ENCODE measurements at regions of chr18 and their contacts with region 1.

Region 1: GRCh38 chr18:35143622-35144596 is 96.9 kb upstream of the ZNF397 start:
- DNase-seq: peak; percentile 70
- H3K4me3 ChIP-seq: no peak overlapping the region; a peak in 1 of 4 replicates
- H3K27ac ChIP-seq: peak overlapping the region in 1 of 2 experiments; percentile 25; a peak in 1 of 4 replicates
- H3K4me1 ChIP-seq: peaks cover 0 to 4% of the 10 kb centered on the region in 2 experiments; a peak in 1 of 4 replicates
- H3K27me3 ChIP-seq: no peaks in the 10 kb centered on the region
- CTCF ChIP-seq: peak; percentile 84
- EP300 ChIP-seq: no peak
- RAD21 ChIP-seq: peak; percentile 97

Region 2: GRCh38 chr18:34867520-34867919 is 276.4 kb before region 1 on chr18:
- CTCF ChIA-PET with region 1: interaction called, 10 read pairs
- POLR2A ChIA-PET with region 1: no interaction called
- DNase-seq: peak; percentile 57
- H3K4me3 ChIP-seq: no peak overlapping the region; a peak in 1 of 4 replicates
- H3K27ac ChIP-seq: no peak overlapping the region
- H3K4me1 ChIP-seq: peaks cover 0 to 4% of the 10 kb centered on the region in 2 experiments; a peak in 2 of 4 replicates
- H3K27me3 ChIP-seq: no peaks in the 10 kb centered on the region
- CTCF ChIP-seq: peak; percentile 39
- EP300 ChIP-seq: no peak
- RAD21 ChIP-seq: peak; percentile 29

Region 3: GRCh38 chr18:35005963-35006577 is 137.8 kb before region 1 on chr18:
- CTCF ChIA-PET with region 1: interaction called, 35 read pairs
- POLR2A ChIA-PET with region 1: interaction called, 3 read pairs
- DNase-seq: peak; percentile 60
- H3K4me3 ChIP-seq: no peak overlapping the region
- H3K27ac ChIP-seq: no peak overlapping the region
- H3K4me1 ChIP-seq: no peaks in the 10 kb centered on the region; a peak in 1 of 4 replicates
- H3K27me3 ChIP-seq: no peaks in the 10 kb centered on the region
- CTCF ChIP-seq: peak; percentile 75
- EP300 ChIP-seq: no peak
- RAD21 ChIP-seq: peak; percentile 95

Region 4: DNA sequence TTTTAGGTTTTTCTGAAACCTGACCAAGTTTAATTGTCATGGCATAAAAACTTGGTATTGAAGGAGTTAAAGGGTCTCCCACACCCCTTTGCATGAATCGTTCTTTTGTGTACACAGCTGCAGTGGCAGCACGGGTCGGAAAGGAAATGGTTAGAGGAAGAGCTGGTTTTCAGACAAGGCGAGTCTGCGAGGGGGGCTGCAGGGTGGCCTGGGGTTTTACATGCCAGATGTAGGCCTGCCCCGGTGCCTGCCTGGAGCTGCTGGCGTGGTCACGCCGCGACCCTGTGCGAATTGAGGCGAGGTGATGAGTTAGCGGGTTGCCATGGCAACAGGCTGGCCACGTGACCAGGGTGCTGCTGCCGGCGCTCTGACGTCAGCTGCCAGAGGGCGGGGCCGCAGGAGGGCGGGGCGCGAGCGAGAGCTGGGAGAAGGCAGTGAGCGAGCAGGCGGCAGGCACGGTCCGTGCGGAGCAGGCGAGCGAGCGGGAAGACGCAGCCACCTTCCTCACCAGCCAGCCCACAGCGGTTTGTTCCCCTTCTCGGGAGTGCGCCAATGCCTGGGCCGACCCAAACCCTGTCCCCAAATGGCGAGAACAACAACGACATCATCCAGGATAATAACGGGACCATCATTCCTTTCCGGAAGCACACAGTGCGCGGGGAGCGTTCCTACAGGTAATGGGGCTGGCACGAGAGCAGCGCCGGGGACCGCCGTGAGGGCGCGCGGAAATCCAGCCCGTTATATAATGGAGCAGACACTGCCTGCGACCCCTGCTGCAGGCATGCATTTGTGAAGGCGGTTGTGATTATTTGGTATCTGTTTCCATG is 102.7 kb before region 1 on chr18 and contains the start of gene MAPRE2:
- CTCF ChIA-PET with region 1: interaction called, 10 read pairs
- POLR2A ChIA-PET with region 1: interaction called, 4 read pairs
- DNase-seq: peak; percentile 95
- H3K4me3 ChIP-seq: peak within 1 kb of the TSS; percentile 67 to 99
- H3K27ac ChIP-seq: peak within 1 kb of the TSS; percentile 79 to 98
- H3K4me1 ChIP-seq: peaks cover 20 to 25% of the 10 kb centered on the region in 2 experiments; a peak in 3 of 4 replicates
- H3K27me3 ChIP-seq: no peaks in the 10 kb centered on the region
- CTCF ChIP-seq: no peak; the same call in 1 of the 2 replicates
- EP300 ChIP-seq: peak in 1 of 2 experiments; percentile 51; a peak in 1 of 4 replicates
- RAD21 ChIP-seq: peak; percentile 29
- polyA plus RNA-seq, gene MAPRE2: 11.5 and 14.1 TPM in 2 replicates

Region 5: GRCh38 chr18:35106845-35107148 is 37.1 kb before region 1 on chr18:
- CTCF ChIA-PET with region 1: interaction called, 15 read pairs
- POLR2A ChIA-PET with region 1: no interaction called
- DNase-seq: no peak
- H3K4me3 ChIP-seq: no peak overlapping the region
- H3K27ac ChIP-seq: peak overlapping the region in 1 of 2 experiments; percentile 89; a peak in 2 of 4 replicates
- H3K4me1 ChIP-seq: peaks cover 0 to 13% of the 10 kb centered on the region in 2 experiments; a peak in 1 of 4 replicates
- H3K27me3 ChIP-seq: no peaks in the 10 kb centered on the region
- CTCF ChIP-seq: no peak
- EP300 ChIP-seq: no peak
- RAD21 ChIP-seq: no peak

Region 6: GRCh38 chr18:35155398-35156117 is 11.6 kb after region 1 on chr18:
- CTCF ChIA-PET with region 1: interaction called, 28 read pairs
- POLR2A ChIA-PET with region 1: no interaction called
- DNase-seq: peak; percentile 76
- H3K4me3 ChIP-seq: no peak overlapping the region
- H3K27ac ChIP-seq: peak overlapping the region in 1 of 2 experiments; percentile 79; a peak in 2 of 4 replicates
- H3K4me1 ChIP-seq: peaks cover 0 to 11% of the 10 kb centered on the region in 2 experiments; a peak in 2 of 4 replicates
- H3K27me3 ChIP-seq: no peaks in the 10 kb centered on the region
- CTCF ChIP-seq: no peak
- EP300 ChIP-seq: peak in 1 of 2 experiments; percentile 92; a peak in 2 of 4 replicates
- RAD21 ChIP-seq: no peak; the same call in 1 of the 2 replicates